OCI-LY7 (cell line): ENCODE measurements at regions of chr4 and their contacts with region 1.

Region 1: DNA sequence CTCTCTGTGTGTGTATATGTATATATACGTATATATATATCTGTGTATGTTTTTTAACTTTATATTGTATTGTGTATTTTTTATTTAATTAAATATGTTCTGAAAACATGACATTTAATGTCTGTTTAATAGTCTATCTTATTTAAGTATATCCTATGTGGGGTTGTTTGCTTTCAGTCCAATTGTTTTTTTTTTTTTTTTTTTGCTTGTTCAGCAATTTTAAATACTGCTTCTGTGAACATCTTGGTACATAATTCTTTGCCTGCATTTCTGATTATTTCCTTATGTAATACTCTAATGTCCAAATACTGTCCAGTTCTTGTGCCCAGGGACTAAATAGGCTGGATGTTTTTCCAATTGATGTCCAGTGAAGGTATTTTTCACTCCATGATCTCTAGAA is 45.1 kb upstream of the MAD2L1 start:
- DNase-seq: no peak
- H3K4me3 ChIP-seq: no peak overlapping the region
- H3K27ac ChIP-seq: no peak overlapping the region
- H3K4me1 ChIP-seq: no peaks in the 10 kb centered on the region
- CTCF ChIP-seq: no peak

Region 2: DNA sequence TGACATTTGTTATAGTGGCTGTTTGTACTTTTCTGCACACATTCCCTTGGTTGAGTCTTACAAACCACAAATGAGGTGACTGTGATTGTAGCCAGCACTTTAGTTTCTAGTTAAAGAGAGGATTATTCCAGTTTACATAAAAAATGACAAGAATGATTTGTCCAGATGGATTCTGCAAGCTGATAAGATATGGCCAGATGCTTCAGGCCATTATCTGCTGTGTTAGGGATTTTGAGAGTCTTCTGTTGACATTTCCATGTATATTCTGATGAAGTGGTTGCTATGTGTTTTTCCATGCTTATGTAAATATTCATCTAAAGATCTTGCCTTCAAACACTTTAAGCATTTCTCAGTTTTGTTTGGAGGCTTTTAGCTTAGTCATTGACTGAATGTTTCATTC is 452.1 kb before region 1 on chr4:
- CTCF ChIA-PET with region 1: no interaction called
- POLR2A ChIA-PET with region 1: no interaction called
- intact Hi-C with region 1: no loop called
- DNase-seq: no peak
- H3K4me3 ChIP-seq: no peak overlapping the region
- H3K27ac ChIP-seq: no peak overlapping the region
- H3K4me1 ChIP-seq: no peaks in the 10 kb centered on the region
- CTCF ChIP-seq: no peak

Region 3: GRCh38 chr4:120132935-120133334 is 21.2 kb after region 1 on chr4:
- CTCF ChIA-PET with region 1: no interaction called
- POLR2A ChIA-PET with region 1: interaction called, 10 read pairs
- intact Hi-C with region 1: no loop called
- DNase-seq: peak; percentile 35
- H3K4me3 ChIP-seq: no peak overlapping the region
- H3K27ac ChIP-seq: peak overlapping the region; percentile 95
- H3K4me1 ChIP-seq: peaks cover 44% of the 10 kb centered on the region
- CTCF ChIP-seq: no peak